Activated B cell treated with CpG ODN at 0.5 μM for 24 hours (primary cell): ENCODE measurements at regions of chr19 and their contacts with region 1.

Region 1: DNA sequence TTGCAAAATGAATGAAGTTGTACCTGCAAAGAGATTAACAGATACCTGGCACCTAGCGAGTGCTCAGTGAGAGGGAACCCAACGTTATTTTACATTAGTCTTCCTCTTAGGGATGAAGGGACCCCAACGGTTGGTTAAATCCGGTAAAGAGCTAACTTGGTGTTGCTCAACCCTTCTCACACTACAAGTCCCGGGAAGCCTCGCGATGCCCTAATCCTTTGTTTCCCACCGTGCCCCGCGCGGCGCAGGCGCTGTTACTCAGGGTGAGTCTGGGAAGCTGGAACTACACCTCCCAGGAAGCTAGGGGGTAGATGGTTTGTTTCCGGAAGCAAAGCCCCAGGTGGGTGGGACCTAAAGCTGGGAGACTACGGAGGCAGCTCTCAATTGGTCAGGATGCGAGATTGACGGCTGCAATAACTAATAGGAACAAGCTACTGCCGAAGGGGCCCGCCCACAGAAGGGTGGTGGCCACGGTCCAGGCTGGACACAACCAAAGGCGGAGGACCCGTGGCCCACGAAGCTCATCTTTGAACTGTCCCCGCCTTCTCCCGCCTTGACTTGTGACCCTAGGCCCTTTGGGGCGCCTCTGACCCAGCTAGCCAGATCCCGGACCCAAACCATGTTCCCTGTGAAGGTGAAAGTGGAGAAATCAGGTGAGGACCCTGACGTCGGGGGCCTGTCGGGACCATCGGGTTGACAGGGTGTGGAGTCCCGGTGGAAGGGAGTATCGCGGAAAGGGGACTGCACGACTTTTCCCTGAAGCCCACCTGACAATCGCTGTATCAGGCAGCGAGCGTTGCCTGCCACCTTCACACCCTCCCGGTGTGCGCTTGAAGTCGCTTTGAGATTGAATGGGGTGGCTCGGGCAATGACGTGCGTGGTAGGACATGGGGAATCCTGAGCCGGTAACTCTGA is at the start of gene LIN37:
- DNase-seq: peak; percentile 91
- ATAC-seq: peak; percentile 73
- H3K4me3 Mint-ChIP-seq: peak within 1 kb of the TSS; percentile 98
- H3K27ac Mint-ChIP-seq: peak within 1 kb of the TSS; percentile 96
- H3K4me1 Mint-ChIP-seq: peaks cover 48% of the 10 kb centered on the region
- H3K27me3 Mint-ChIP-seq: no peaks in the 10 kb centered on the region
- CTCF ChIP-seq: no peak
- total RNA-seq, gene LIN37: 12.2 and 14.3 TPM in 2 replicates

Region 2: DNA sequence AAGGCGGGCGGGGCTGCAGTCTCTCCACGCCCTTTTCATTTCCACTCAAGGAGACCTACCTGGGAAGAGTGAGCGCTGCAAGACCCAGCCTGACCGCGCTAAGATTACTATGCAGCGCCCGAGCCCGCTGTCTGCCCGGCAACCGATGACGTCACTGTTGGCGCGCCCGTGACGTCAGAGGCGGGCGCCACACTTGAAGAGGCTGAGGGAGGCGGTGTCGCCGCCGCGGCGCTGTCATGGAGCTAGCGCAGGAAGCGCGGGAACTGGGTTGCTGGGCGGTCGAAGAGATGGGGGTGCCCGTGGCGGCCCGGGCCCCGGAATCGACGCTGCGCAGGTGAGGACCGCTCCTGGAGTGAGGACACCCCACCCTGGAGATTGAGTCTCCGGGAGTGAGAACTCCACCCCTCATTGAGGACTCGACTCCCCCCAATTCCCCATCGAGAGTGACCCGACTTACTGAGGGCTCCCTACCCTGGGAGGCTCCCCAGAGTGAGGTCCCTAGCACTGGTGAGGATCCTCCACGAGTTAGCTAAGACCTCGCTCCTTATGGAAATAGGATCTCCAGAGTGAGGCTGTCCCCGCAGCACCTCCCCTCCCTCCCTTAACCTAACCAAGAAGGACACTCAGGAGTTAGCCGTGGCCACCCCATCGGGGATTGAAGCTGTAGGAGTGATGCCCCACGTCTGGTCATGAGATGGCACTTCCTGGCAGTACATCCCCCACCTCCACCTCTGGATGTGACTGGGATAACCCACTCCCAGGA is 135.6 kb before region 1 on chr19 and contains the start of gene HAUS5:
- CTCF ChIA-PET with region 1: no interaction called
- POLR2A ChIA-PET with region 1: interaction called, 11 read pairs
- intact Hi-C with region 1: loop called (anchors 2 kb)
- DNase-seq: peak; percentile 99
- ATAC-seq: peak; percentile 78
- H3K4me3 Mint-ChIP-seq: peak within 1 kb of the TSS; percentile 87
- H3K27ac Mint-ChIP-seq: peak within 1 kb of the TSS; percentile 93
- H3K4me1 Mint-ChIP-seq: peaks cover 48% of the 10 kb centered on the region
- H3K27me3 Mint-ChIP-seq: no peaks in the 10 kb centered on the region
- CTCF ChIP-seq: no peak
- total RNA-seq, gene HAUS5: 31.5 and 36.1 TPM in 2 replicates

Region 3: GRCh38 chr19:35702223-35703012 is 45.9 kb before region 1 on chr19:
- CTCF ChIA-PET with region 1: no interaction called
- POLR2A ChIA-PET with region 1: interaction called, 12 read pairs
- intact Hi-C with region 1: no loop called
- DNase-seq: peak; percentile 82
- ATAC-seq: peak; percentile 99
- H3K4me3 Mint-ChIP-seq: peak overlapping the region; percentile 98
- H3K27ac Mint-ChIP-seq: peak overlapping the region; percentile 96
- H3K4me1 Mint-ChIP-seq: peaks cover 7% of the 10 kb centered on the region
- H3K27me3 Mint-ChIP-seq: no peaks in the 10 kb centered on the region
- CTCF ChIP-seq: no peak

Region 4: GRCh38 chr19:35775298-35776110 is 27.1 kb after region 1 on chr19 and contains the start of gene ARHGAP33:
- CTCF ChIA-PET with region 1: no interaction called
- POLR2A ChIA-PET with region 1: interaction called, 7 read pairs
- intact Hi-C with region 1: loop called (anchors 1 kb)
- DNase-seq: peak; percentile 97
- ATAC-seq: peak; percentile 99
- H3K4me3 Mint-ChIP-seq: peak within 1 kb of the TSS; percentile 79
- H3K27ac Mint-ChIP-seq: no peak within 1 kb of the TSS
- H3K4me1 Mint-ChIP-seq: peaks cover 9% of the 10 kb centered on the region
- H3K27me3 Mint-ChIP-seq: no peaks in the 10 kb centered on the region
- CTCF ChIP-seq: no peak
- total RNA-seq, gene ARHGAP33: 9.3 and 15.0 TPM in 2 replicates

Region 5: GRCh38 chr19:35790981-35791813 is 42.8 kb after region 1 on chr19:
- CTCF ChIA-PET with region 1: no interaction called
- POLR2A ChIA-PET with region 1: no interaction called
- intact Hi-C with region 1: no loop called
- DNase-seq: no peak
- ATAC-seq: no peak
- H3K4me3 Mint-ChIP-seq: no peak overlapping the region
- H3K27ac Mint-ChIP-seq: no peak overlapping the region
- H3K4me1 Mint-ChIP-seq: no peaks in the 10 kb centered on the region
- H3K27me3 Mint-ChIP-seq: peaks cover 7% of the 10 kb centered on the region
- CTCF ChIP-seq: no peak

Region 6: GRCh38 chr19:35995048-35995993 is 247.0 kb after region 1 on chr19 and contains the start of gene SDHAF1:
- CTCF ChIA-PET with region 1: no interaction called
- POLR2A ChIA-PET with region 1: no interaction called
- intact Hi-C with region 1: loop called (anchors 1 kb)
- DNase-seq: peak; percentile 88
- ATAC-seq: peak; percentile 94
- H3K4me3 Mint-ChIP-seq: peak within 1 kb of the TSS; percentile 94
- H3K27ac Mint-ChIP-seq: peak within 1 kb of the TSS; percentile 94
- H3K4me1 Mint-ChIP-seq: peaks cover 33% of the 10 kb centered on the region
- H3K27me3 Mint-ChIP-seq: no peaks in the 10 kb centered on the region
- CTCF ChIP-seq: no peak
- total RNA-seq, gene SDHAF1: 20.3 and 21.9 TPM in 2 replicates